PC-9 (cell line): ENCODE measurements at regions of chr3 and their contacts with region 1.

Region 1: DNA sequence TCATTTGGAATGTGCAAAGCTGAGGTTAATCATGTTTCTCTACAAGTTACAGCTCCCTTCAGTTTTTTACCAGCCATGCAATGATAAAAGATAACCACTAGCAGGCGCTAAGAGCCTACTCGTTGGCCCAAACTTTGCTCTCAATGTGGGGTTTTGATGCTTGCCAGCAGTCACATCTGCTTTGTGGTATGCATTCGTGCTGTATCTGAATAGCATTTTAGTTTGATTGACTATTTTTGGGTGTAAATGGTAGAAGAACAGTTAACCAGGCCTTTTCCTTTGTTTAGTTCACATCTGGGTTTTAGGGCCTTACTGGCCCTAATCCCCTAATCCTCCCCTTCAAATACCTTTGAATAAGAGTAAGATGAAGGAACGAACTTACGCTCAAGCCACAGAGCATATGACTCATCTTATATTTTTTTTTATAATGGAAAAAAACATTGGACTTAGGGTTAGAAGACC is 4.4 kb upstream of the CLDN11 start:
- DNase-seq: peak; percentile 62 to 68
- H3K4me3 ChIP-seq: no peak overlapping the region
- H3K27ac ChIP-seq: no peak overlapping the region
- H3K4me1 ChIP-seq: no peaks in the 10 kb centered on the region
- H3K27me3 ChIP-seq: no peaks in the 10 kb centered on the region
- CTCF ChIP-seq: peak; percentile 99

Region 2: GRCh38 chr3:169764452-169765274 is 649.6 kb before region 1 on chr3 and contains the start of gene TERC:
- CTCF ChIA-PET with region 1: no interaction called
- POLR2A ChIA-PET with region 1: no interaction called
- intact Hi-C with region 1: loop called (anchors 1 kb)
- DNase-seq: peak; percentile 93 to 96
- H3K4me3 ChIP-seq: peak within 1 kb of the TSS; percentile 99
- H3K27ac ChIP-seq: peak within 1 kb of the TSS; percentile 75
- H3K4me1 ChIP-seq: peaks cover 5% of the 10 kb centered on the region; the same call in 1 of the 2 replicates
- H3K27me3 ChIP-seq: no peaks in the 10 kb centered on the region
- CTCF ChIP-seq: no peak
- total RNA-seq, gene TERC: 7.6 and 22.7 TPM in 2 replicates

Region 3: DNA sequence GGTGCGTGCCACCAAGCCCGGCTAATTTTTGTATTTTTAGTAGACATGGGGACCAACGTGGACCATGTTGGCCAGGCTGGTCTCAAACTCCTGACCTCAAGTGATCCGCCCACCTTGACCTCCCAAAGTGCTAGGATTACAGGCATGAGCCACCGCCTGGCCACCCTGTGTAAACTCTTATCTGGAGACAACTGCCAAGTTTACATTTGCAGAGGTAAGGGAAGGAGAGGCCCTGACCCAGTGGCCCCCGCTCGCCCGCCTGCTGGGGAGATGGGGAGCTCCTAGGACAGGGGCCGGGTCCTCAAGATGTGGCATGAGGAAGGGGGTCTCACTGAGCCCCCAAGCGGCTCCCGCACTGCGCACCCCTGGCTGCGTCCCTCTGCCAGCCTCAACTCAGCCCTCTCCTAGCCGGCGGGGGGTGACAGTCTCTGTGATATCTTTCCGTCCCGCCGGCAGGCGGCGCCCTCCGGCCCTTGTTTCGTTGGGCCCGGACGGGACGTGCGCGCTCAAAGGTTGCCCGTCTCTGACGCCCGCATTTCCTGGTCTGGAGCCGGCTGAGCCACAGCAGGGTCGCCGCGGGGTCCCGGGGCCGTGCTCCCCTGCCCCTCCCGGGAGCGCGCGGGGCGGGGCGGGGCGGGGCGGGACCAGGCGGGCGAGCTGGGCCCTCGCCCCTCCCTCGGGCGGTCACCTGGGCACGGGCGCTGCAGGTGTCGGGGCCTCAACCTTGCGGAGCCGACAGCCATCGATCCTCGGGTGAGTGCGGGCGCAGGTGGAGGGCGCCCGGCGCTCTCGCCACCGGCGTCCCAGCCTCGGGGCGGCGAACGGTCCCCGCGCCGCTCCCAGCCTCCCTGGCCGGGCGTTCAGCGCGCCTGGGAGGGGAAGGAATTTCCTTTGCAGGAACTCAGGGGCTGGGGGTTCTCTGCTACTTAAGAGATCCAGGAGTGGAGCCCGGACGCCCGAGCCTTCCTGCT is 376.5 kb before region 1 on chr3 and contains the start of gene GPR160:
- CTCF ChIA-PET with region 1: no interaction called
- POLR2A ChIA-PET with region 1: no interaction called
- intact Hi-C with region 1: loop called (anchors 5 kb)
- DNase-seq: peak; percentile 73 to 89
- H3K4me3 ChIP-seq: peak within 1 kb of the TSS; percentile 79
- H3K27ac ChIP-seq: no peak within 1 kb of the TSS
- H3K4me1 ChIP-seq: peaks cover 9% of the 10 kb centered on the region
- H3K27me3 ChIP-seq: no peaks in the 10 kb centered on the region
- CTCF ChIP-seq: peak; percentile 98
- total RNA-seq, gene GPR160: 11.1 and 12.6 TPM in 2 replicates

Region 4: DNA sequence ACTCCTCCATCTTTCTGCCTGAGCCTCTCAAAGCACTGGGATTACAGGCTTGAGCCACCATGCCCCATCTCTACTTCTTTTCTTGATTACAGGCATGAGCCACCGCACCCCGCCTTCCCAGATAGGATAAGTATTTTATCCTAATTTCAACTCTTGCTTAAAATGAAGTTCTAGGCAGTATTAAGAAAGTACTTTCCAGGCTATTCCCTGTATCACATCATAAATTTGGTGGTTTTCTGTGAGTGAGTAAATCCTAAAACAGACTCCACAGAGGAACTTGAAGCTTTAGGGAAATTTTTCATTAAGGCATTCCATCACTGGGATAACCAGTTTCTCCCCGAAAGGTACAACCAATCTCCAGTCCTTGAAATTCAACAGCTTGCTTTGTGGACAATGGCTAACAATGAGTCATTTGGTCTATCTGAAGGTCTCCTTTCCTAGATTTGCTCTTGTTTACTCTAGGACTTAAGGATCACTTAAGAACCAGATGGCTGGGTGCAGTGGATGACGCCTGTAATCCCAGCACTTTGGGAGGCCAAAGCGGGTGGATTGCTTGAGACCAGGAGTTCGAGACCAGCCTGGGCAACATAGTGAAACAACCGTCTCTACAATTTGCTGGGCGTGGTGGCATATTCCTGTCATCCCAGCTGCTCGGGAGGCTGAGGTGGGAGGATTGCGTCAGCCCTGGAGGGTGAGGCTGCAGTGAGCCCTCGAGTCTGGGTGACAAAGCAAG is 106.4 kb before region 1 on chr3:
- CTCF ChIA-PET with region 1: interaction called, 11 read pairs
- POLR2A ChIA-PET with region 1: no interaction called
- intact Hi-C with region 1: loop called (anchors 1 kb)
- DNase-seq: peak; percentile 59 to 99
- H3K4me3 ChIP-seq: no peak overlapping the region
- H3K27ac ChIP-seq: peak overlapping the region; percentile 42
- H3K4me1 ChIP-seq: peaks cover 19% of the 10 kb centered on the region
- H3K27me3 ChIP-seq: no peaks in the 10 kb centered on the region
- CTCF ChIP-seq: no peak

Region 5: GRCh38 chr3:170572665-170573253 is 158.5 kb after region 1 on chr3:
- CTCF ChIA-PET with region 1: no interaction called
- POLR2A ChIA-PET with region 1: no interaction called
- intact Hi-C with region 1: loop called (anchors 5 kb)
- DNase-seq: peak; percentile 19 to 75
- H3K4me3 ChIP-seq: no peak overlapping the region
- H3K27ac ChIP-seq: peak overlapping the region; percentile 37; the same call in 1 of the 2 replicates
- H3K4me1 ChIP-seq: peaks cover 13% of the 10 kb centered on the region
- H3K27me3 ChIP-seq: no peaks in the 10 kb centered on the region
- CTCF ChIP-seq: no peak

Region 6: DNA sequence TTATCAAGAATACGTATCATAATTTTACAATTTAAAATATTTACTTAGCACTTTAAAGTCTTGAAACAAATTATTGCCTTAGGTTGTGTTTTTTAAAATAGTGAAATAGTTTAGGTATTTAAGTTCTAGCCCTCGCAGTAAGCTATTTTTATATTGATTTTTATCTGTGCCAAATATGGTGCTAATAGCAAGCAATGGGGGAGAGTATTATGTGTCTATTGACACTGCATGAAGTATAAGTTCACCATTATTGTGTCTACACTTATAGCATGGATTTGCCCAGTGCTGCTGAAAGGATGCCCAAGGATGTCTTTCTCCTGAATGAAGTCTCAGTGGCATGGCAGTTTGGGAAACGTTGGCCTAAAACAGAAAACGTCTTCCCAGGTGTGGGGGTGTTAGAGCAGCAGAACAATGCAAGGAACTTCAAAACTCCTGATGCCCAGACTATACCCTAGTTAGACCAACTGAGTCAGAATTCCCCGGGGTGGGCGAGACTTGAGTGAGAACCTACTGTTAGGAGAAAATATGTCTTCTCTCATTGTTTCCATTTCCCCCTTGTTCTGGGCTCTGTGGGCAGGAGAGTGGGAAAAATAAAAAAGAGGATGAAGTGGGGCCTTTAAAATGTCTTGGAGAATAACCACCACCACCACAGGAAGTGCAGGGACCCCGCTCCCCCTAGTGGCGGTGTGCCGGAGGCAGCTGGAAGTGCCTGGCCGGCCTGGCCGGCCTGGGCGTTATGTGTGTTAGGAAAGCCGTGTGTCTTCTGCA is 275.8 kb after region 1 on chr3:
- CTCF ChIA-PET with region 1: interaction called, 5 read pairs
- POLR2A ChIA-PET with region 1: interaction called, 7 read pairs
- intact Hi-C with region 1: loop called (anchors 1 kb)
- DNase-seq: no peak
- H3K4me3 ChIP-seq: no peak overlapping the region
- H3K27ac ChIP-seq: no peak overlapping the region; the same call in 1 of the 2 replicates
- H3K4me1 ChIP-seq: peaks cover 33% of the 10 kb centered on the region
- H3K27me3 ChIP-seq: no peaks in the 10 kb centered on the region
- CTCF ChIP-seq: peak; percentile 66

Region 7: GRCh38 chr3:170848292-170848917 is 434.2 kb after region 1 on chr3:
- CTCF ChIA-PET with region 1: interaction called, 23 read pairs
- POLR2A ChIA-PET with region 1: interaction called, 4 read pairs
- intact Hi-C with region 1: loop called (anchors 1 kb)
- DNase-seq: no peak
- H3K4me3 ChIP-seq: no peak overlapping the region
- H3K27ac ChIP-seq: no peak overlapping the region
- H3K4me1 ChIP-seq: no peaks in the 10 kb centered on the region
- H3K27me3 ChIP-seq: no peaks in the 10 kb centered on the region
- CTCF ChIP-seq: peak; percentile 79